Activated CD4-positive, alpha-beta T cell treated with anti-CD3 and anti-CD28 coated beads, Interleukin-2, amount 10 ng/mL, durations not matched to agents 24 days and 14 days (primary cell): ENCODE measurements at regions of chr4 and their contacts with region 1.

Region 1: GRCh38 chr4:177339477-177340374 is 30.1 kb downstream of the NEIL3 start:
- DNase-seq: peak; percentile 62
- H3K4me3 Mint-ChIP-seq: no peak overlapping the region
- H3K27ac Mint-ChIP-seq: peak overlapping the region; percentile 67
- H3K4me1 Mint-ChIP-seq: peaks cover 16% of the 10 kb centered on the region
- H3K27me3 Mint-ChIP-seq: no peaks in the 10 kb centered on the region

Region 2: DNA sequence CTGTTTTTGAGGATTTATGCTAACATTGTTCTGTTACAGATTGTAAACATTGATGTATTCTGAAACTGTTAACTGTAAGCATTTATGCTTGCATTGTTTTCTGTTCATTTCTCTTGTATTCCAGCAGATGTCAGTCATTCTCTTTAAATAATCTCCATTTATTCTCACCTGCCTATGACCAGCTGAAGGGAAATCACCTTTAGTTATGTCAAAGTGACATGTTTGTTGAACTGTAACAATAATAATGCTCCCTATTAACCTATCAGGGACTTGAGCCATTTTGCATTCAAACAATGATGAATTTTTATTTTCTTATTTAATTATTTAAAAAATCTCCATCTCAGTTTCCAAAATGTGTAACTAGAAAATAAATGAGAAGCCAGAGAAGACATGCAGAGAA is 961.9 kb before region 1 on chr4:
- intact Hi-C with region 1: loop called (anchors 5 kb)
- DNase-seq: no peak
- H3K4me3 Mint-ChIP-seq: no peak overlapping the region
- H3K27ac Mint-ChIP-seq: no peak overlapping the region
- H3K4me1 Mint-ChIP-seq: no peaks in the 10 kb centered on the region
- H3K27me3 Mint-ChIP-seq: peaks cover 19% of the 10 kb centered on the region